Activated B cell treated with CpG ODN at 0.5 μM for 24 hours (primary cell): ENCODE measurements at regions of chr5 and their contacts with region 1.

Region 1: DNA sequence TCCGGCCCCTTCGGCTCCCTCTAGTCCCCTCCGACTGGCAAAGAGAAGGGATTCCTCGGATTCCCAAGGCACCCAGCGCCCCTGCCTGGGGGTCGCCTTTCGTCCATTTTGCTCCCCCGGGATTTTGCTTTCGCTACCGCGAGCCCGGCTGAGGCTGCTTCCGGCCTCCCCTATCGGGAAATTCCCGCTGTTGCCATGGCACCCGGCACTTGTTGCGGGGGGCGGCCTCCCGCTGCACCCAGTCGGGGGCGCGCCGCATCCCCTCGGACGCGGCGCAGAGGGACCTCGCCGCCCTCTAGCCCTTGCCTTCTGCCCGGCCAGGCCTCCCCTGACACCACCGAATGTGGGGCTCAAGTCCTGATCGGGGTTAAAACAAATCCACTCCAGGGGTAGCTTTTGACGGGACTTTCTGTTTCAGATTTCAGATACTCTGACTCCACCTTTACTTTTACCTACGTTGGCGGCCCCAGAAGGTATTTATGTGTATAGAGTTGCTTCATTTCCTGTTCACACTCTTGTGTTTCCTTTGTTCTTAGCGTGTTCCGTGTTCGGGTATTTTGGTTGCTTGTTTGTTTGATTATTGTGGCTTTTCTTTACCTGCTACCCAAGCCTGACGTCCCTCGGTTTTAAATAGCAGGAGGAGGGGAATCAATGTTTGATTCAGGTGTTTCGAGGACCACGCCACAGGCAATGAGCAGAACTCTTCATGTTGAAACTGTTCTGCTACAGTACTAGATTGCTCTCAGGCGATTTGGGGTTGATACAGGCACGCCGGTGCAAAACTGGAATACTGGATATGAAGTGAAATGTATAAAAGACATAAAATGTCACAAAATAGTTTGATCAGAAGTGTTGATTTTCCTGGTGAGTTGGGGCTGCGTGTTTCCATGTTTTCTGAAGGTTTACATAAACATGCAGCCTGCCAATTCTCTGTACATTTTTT is 1.5 kb downstream of the PARP8 start:
- DNase-seq: peak; percentile 92
- ATAC-seq: peak; percentile 71
- H3K4me3 Mint-ChIP-seq: peak overlapping the region; percentile 99
- H3K27ac Mint-ChIP-seq: peak overlapping the region; percentile 100
- H3K4me1 Mint-ChIP-seq: peaks cover 50% of the 10 kb centered on the region
- H3K27me3 Mint-ChIP-seq: no peaks in the 10 kb centered on the region
- CTCF ChIP-seq: no peak

Region 2: DNA sequence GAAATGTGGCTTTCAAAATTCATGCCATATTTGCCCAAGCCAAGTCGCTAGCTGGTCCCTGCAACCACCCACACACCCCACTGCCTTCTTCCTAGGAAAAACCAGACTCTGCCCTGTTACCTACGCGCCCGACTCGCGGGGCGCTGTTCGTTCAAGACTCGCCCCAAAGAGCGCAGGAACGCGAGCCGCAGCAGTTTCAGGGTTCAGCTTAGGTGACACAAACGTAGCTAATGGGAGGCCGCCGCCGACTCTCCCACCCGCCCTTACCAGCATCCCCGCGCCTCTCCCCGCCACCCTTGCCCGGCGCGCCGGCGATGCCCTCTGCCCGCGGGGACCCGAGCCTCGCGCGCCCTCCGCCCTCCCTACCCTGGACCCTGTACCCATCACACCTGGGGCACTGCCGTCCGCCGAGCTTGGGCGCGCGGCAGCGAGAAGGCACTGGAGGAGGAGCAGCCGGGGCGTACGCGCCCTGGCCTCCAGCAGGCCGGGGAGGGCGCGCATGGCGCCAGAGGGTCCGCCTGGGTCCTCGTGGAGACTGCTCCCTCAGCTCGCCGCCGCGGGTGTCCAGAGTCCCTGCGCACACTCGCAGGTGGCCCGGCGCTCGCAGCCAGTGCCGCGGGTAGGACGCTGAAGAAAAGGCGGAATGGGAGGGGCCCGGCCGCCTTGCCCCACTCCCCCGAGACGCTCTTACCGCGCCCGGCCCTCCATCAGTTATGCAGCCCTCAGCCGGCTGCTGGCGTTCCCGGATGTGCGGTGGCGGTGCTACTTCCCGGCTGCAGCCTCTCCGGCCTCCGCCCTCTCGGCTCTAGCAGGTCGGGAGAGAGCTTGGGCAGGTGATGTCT is 227.1 kb before region 1 on chr5 and contains the start of gene EMB:
- CTCF ChIA-PET with region 1: no interaction called
- POLR2A ChIA-PET with region 1: interaction called, 24 read pairs
- intact Hi-C with region 1: loop called (anchors 1 kb)
- DNase-seq: peak; percentile 73
- ATAC-seq: peak; percentile 79
- H3K4me3 Mint-ChIP-seq: peak within 1 kb of the TSS; percentile 90
- H3K27ac Mint-ChIP-seq: peak within 1 kb of the TSS; percentile 98
- H3K4me1 Mint-ChIP-seq: peaks cover 64% of the 10 kb centered on the region
- H3K27me3 Mint-ChIP-seq: no peaks in the 10 kb centered on the region
- CTCF ChIP-seq: no peak
- total RNA-seq, gene EMB: 70.2 and 72.1 TPM in 2 replicates

Region 3: DNA sequence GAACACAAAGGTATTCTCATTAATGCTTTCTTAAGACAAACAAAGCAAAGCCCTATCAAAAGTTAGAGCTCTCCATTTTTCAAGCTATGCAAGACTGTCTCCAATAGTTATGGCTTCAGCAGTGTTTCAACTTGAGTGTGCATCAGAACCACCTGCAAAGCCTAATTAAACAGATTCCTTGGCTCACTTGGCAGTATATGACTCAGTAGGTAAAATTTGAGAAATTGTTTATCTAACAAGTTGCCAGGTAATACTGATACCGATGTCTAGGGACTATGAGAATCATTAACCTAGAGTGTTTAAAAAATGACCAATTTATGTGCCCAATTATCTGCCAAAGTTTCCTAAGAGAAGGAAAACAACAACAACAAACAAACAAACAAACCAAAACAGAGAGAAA is 61.7 kb before region 1 on chr5:
- CTCF ChIA-PET with region 1: no interaction called
- POLR2A ChIA-PET with region 1: no interaction called
- intact Hi-C with region 1: loop called (anchors 5 kb)
- DNase-seq: no peak
- ATAC-seq: no peak
- H3K4me3 Mint-ChIP-seq: no peak overlapping the region
- H3K27ac Mint-ChIP-seq: no peak overlapping the region
- H3K4me1 Mint-ChIP-seq: peaks cover 7% of the 10 kb centered on the region
- H3K27me3 Mint-ChIP-seq: no peaks in the 10 kb centered on the region
- CTCF ChIP-seq: no peak

Region 4: DNA sequence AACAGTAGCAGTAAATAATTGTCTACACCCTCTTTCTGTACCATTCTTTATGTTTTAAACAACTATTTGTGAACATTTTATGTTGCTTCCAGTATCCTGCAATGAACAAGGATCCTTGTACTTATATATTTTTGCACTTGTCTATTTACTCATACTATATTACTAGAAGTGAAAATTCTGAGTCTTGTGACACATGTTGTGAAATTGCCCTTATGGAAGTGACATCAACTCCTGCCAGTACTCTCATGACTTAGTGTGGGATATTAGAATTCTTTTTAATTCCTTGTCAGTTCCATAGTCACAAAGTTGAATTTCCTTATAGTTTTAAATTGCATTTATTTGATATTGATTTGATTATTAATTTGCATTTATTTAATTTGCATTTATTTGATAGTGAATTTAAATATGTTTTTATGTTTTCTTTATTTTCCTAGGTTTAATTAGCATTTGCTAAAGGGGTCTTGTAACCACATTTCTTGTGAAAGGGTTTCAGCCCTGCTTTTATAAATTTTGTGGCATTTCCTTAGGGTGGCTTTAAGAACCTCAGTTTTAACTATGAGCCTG is 26.2 kb after region 1 on chr5:
- CTCF ChIA-PET with region 1: no interaction called
- POLR2A ChIA-PET with region 1: interaction called, 3 read pairs
- intact Hi-C with region 1: loop called (anchors 2 kb)
- DNase-seq: no peak
- ATAC-seq: no peak
- H3K4me3 Mint-ChIP-seq: no peak overlapping the region
- H3K27ac Mint-ChIP-seq: no peak overlapping the region
- H3K4me1 Mint-ChIP-seq: peaks cover 34% of the 10 kb centered on the region
- H3K27me3 Mint-ChIP-seq: no peaks in the 10 kb centered on the region
- CTCF ChIP-seq: no peak

Region 5: GRCh38 chr5:50751064-50751657 is 83.2 kb after region 1 on chr5:
- CTCF ChIA-PET with region 1: interaction called, 3 read pairs
- POLR2A ChIA-PET with region 1: interaction called, 8 read pairs
- intact Hi-C with region 1: loop called (anchors 1 kb)
- DNase-seq: no peak
- ATAC-seq: peak; percentile 91
- H3K4me3 Mint-ChIP-seq: no peak overlapping the region
- H3K27ac Mint-ChIP-seq: no peak overlapping the region
- H3K4me1 Mint-ChIP-seq: peaks cover 21% of the 10 kb centered on the region
- H3K27me3 Mint-ChIP-seq: no peaks in the 10 kb centered on the region
- CTCF ChIP-seq: peak; percentile 68

Region 6: DNA sequence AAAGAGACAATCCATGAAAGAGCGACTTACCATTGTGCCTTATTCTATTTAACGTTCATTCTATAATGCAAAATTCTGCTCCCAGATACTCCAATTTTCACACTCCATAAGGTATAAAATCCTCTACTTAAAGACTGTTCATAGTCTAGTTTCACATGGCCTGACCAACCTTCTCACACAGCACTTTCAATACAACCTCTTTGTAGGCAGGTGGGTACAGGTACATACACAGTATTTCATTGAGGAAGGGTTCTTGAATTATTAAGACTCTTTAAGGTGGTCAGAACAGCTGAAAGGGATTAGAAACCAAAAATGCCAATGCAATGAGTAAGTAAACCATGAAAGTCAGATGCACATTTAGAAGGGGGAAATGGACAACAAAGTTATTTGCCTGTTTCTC is 350.5 kb after region 1 on chr5:
- CTCF ChIA-PET with region 1: no interaction called
- POLR2A ChIA-PET with region 1: no interaction called
- intact Hi-C with region 1: no loop called
- DNase-seq: no peak
- ATAC-seq: no peak
- H3K4me3 Mint-ChIP-seq: no peak overlapping the region
- H3K27ac Mint-ChIP-seq: no peak overlapping the region
- H3K4me1 Mint-ChIP-seq: no peaks in the 10 kb centered on the region
- H3K27me3 Mint-ChIP-seq: no peaks in the 10 kb centered on the region
- CTCF ChIP-seq: no peak